Calu3 (cell line): ENCODE measurements at regions of chr20 and their contacts with region 1.

Region 1: DNA sequence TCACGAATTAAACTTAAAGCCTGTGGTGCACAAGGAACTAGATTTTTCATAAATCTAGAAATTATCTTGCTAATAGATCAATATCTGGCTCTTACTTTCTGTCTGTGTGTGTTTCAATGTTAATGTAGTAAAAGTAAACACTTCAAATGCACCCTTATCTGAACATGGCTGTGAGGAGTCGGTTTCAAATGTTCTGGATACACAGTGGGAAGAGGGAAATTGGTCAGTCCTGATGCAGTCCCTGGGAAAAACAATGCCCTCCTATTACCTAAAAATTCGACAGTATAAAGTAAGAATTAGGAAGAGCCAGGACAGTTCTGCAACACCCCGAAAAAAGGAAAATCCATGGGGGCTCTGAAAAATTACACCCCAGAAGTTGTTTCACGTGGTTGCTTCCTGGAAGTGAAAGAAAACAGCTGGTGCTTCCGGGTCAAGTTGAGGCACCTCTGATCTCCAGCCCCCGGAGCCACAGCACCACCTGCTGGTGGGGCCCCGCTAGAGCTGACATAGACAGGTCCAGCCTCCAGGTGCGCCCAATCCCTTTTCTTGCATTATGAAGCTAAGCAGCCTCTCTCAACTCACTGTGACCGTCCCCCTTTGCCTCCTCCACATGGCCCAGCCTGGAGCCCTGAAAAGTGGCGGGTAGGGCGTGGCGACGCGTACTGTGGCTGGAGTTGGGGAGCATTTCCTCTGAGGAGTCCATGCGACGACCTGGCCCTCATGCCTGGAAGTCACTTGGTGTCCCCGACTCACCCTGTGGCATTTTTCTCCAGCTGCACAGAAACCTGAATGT is 8.3 kb downstream of the SEMG2 start:
- DNase-seq: peak; percentile 97
- H3K4me3 Mint-ChIP-seq: peak overlapping the region; percentile 50
- H3K27ac Mint-ChIP-seq: peak overlapping the region; percentile 35
- H3K4me1 Mint-ChIP-seq: peaks cover 10% of the 10 kb centered on the region
- H3K27me3 Mint-ChIP-seq: peaks cover 63% of the 10 kb centered on the region
- CTCF ChIP-seq: peak; percentile 99

Region 2: GRCh38 chr20:45011108-45011526 is 218.3 kb before region 1 on chr20:
- CTCF ChIA-PET with region 1: interaction called, 10 read pairs
- intact Hi-C with region 1: loop called (anchors 1 kb)
- DNase-seq: peak; percentile 75
- H3K4me3 Mint-ChIP-seq: no peak overlapping the region
- H3K27ac Mint-ChIP-seq: peak overlapping the region; percentile 11
- H3K4me1 Mint-ChIP-seq: peaks cover 42% of the 10 kb centered on the region
- H3K27me3 Mint-ChIP-seq: no peaks in the 10 kb centered on the region
- CTCF ChIP-seq: peak; percentile 74

Region 3: GRCh38 chr20:45095753-45096371 is 133.6 kb before region 1 on chr20:
- CTCF ChIA-PET with region 1: interaction called, 14 read pairs
- intact Hi-C with region 1: no loop called
- DNase-seq: peak; percentile 75
- H3K4me3 Mint-ChIP-seq: no peak overlapping the region
- H3K27ac Mint-ChIP-seq: no peak overlapping the region
- H3K4me1 Mint-ChIP-seq: peaks cover 9% of the 10 kb centered on the region
- H3K27me3 Mint-ChIP-seq: no peaks in the 10 kb centered on the region
- CTCF ChIP-seq: peak; percentile 76

Region 4: DNA sequence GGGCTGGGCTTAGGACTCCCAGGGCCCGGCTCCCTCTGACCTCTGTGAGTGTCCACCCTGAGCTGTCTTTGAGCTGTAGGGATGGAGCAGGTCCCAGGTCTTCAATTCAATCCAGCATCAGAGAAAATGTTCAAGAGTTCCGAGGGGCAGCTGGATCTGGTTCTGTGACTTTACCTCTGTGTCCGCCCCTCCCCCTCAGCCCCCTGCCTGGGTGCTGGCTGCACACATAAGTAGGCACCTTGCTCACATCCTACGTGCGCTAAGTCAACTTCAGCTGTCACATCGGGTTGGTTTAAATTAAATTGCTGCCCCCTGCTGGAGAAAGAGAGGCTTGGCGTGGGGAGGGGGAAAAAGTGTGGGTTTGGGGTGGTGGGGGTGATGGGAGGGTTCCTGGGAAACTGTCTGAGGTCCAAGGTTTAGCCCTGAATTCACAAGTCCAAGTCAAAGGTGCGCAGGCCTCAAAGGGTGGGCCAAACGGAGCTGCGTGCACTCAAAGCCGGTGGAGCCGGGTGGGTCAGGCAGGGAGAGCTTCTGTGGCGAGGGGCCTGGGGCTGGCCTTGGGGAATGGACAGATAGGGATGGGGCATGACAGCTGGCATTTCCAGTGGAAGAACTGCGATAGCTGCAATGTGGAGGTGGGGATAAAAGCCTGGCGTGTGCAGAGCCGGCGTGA is 117.5 kb before region 1 on chr20:
- CTCF ChIA-PET with region 1: interaction called, 16 read pairs
- intact Hi-C with region 1: no loop called
- DNase-seq: peak; percentile 43
- H3K4me3 Mint-ChIP-seq: no peak overlapping the region
- H3K27ac Mint-ChIP-seq: no peak overlapping the region
- H3K4me1 Mint-ChIP-seq: no peaks in the 10 kb centered on the region
- H3K27me3 Mint-ChIP-seq: peaks cover 36% of the 10 kb centered on the region
- CTCF ChIP-seq: peak; percentile 86

Region 5: DNA sequence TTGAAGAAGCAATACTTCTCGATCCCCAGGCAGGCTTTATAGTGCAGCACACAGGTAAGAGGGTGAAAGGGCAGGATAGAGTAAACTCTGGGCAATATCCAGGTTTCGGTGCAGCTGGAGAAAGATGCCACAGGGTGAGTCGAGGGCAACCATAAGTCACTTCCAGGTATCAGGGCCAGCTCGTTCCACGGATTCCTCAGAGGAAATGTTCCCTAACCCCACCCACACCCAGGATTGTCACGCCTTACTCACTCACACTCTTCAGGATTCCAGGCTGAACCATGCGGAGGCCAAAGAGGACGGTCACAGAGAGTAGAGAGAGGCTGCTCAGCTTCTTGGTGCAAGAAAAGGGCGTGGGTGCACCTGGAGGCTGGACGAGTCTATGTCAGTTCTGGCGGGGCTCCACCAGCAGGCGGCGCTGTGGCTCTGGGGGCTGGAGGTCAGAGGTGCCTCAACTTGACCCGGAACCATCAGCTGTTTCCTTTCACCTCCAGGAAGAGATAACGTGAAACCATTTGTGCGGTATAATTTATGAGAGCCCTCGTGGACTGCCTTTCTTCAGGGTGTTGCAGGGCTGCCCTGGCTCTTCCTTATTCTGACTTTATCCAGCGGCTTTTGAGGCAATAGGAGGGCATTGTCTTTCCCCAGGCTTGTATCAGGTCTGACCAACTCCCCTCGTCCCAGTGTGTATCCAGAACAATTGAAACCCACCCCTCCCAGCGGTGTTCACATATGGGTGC is 90.7 kb before region 1 on chr20:
- CTCF ChIA-PET with region 1: interaction called, 55 read pairs
- intact Hi-C with region 1: loop called (anchors 1 kb)
- DNase-seq: peak; percentile 90
- H3K4me3 Mint-ChIP-seq: no peak overlapping the region
- H3K27ac Mint-ChIP-seq: no peak overlapping the region
- H3K4me1 Mint-ChIP-seq: no peaks in the 10 kb centered on the region
- H3K27me3 Mint-ChIP-seq: peaks cover 18% of the 10 kb centered on the region
- CTCF ChIP-seq: peak; percentile 99

Region 6: DNA sequence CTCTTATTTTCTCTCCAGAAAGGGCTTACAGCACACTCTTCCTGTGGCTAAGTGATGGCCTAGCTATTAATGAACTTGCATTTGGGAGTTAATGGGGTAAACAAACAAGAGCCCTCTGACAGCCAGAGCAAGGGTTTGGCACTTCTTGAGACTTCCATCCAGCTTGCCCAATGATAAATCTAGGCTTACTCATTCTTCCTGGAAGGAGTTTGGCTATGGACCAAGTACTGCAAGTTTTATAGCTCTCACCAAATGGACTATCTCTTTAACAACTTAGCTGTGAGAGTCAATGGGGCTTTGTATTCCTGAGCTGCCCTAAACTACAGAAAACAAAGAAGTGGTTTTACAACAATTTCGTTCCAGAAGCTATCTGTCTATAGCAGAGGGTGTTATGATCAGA is 71.5 kb before region 1 on chr20:
- CTCF ChIA-PET with region 1: interaction called, 10 read pairs
- intact Hi-C with region 1: no loop called
- DNase-seq: peak; percentile 57
- H3K4me3 Mint-ChIP-seq: peak overlapping the region; percentile 18
- H3K27ac Mint-ChIP-seq: peak overlapping the region; percentile 0
- H3K4me1 Mint-ChIP-seq: peaks cover 26% of the 10 kb centered on the region
- H3K27me3 Mint-ChIP-seq: peaks cover 28% of the 10 kb centered on the region
- CTCF ChIP-seq: no peak

Region 7: GRCh38 chr20:45263556-45264266 is 34.3 kb after region 1 on chr20:
- CTCF ChIA-PET with region 1: no interaction called
- intact Hi-C with region 1: no loop called
- DNase-seq: no peak
- H3K4me3 Mint-ChIP-seq: no peak overlapping the region
- H3K27ac Mint-ChIP-seq: no peak overlapping the region
- H3K4me1 Mint-ChIP-seq: peaks cover 10% of the 10 kb centered on the region
- H3K27me3 Mint-ChIP-seq: no peaks in the 10 kb centered on the region
- CTCF ChIP-seq: no peak